Activated T-helper 1 cell treated with anti-CD3 and anti-CD28 coated beads, Interleukin-12 subunit alpha, Interleukin-12 subunit beta, Interleukin-2, Interleukin-4 antibody, amounts not matched to agents 30 ng/mL and 10 ng/mL and 1 ng/mL, durations not matched to agents 14 hours and 24 hours and 36 hours (primary cell): ENCODE measurements at regions of chr1 and their contacts with region 1.

Region 1: DNA sequence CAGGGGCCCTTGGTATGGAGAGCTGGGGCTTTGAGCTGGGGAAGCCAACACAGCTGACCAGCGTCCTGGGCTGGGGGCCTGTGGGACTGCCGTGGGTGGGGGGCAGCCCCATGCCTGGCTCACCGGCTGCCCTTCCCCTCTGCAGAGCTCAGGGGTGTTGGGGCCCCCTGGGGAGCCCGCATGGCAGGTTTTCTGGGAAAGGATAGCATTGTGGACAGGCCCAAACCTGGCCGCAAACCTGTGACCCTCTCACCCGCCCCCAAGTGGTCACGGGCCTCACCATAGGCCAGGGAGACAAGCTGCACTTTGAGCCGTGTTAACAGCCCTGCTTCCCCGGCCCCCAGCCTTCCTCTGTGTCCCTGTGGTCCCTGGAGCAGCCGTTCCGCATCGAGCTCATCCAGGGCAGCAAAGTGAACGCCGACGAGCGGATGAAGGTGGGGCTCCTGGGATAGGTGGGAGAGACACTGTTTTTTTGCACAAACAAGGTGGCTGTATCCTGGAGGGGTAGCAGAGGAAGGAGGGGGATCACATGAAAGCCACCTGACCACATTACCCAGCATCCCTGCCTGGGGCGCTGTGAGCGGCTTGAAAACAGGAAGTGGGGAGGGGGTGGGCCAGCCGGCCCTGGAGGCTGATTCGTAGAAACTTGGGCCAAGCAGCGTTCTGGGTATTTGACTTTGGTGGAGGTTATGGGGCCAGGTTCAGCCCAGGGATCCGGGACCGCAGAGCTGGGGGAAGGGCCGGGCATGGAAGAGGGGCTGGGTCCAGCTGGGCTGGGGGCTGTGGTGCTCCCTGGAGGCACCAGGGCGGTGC is 65.9 kb downstream of the PIK3CD start:
- DNase-seq: peak; percentile 86
- H3K4me3 Mint-ChIP-seq: peak overlapping the region; percentile 82
- H3K27ac Mint-ChIP-seq: peak overlapping the region; percentile 97
- H3K4me1 Mint-ChIP-seq: peaks cover 37% of the 10 kb centered on the region
- H3K27me3 Mint-ChIP-seq: no peaks in the 10 kb centered on the region

Region 2: GRCh38 chr1:9689011-9689706 is 28.2 kb before region 1 on chr1:
- intact Hi-C with region 1: loop called (anchors 1 kb)
- DNase-seq: peak; percentile 71
- H3K4me3 Mint-ChIP-seq: peak overlapping the region; percentile 75
- H3K27ac Mint-ChIP-seq: peak overlapping the region; percentile 70
- H3K4me1 Mint-ChIP-seq: peaks cover 59% of the 10 kb centered on the region
- H3K27me3 Mint-ChIP-seq: no peaks in the 10 kb centered on the region

Region 3: DNA sequence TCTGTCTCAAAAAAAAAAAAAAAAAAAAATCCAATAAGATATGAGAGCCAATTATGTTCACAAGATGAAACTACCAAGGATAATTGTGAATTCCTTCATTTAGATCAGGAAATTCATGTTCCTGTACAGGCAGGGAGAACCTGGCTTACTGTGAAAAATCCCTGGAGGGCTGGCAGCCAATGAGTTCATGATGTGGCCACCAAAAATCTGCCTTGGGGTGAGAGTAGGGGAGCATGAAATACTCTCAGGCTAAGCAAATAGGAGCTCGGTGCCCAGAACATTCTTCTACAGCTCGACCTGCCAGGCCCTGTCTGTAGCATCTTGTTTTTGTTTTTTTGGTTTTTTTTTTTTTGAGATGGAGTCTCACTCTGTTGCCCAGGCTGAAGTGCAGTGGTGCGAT is 15.7 kb before region 1 on chr1:
- intact Hi-C with region 1: loop called (anchors 2 kb)
- DNase-seq: no peak
- H3K4me3 Mint-ChIP-seq: no peak overlapping the region
- H3K27ac Mint-ChIP-seq: no peak overlapping the region
- H3K4me1 Mint-ChIP-seq: peaks cover 59% of the 10 kb centered on the region
- H3K27me3 Mint-ChIP-seq: no peaks in the 10 kb centered on the region

Region 4: DNA sequence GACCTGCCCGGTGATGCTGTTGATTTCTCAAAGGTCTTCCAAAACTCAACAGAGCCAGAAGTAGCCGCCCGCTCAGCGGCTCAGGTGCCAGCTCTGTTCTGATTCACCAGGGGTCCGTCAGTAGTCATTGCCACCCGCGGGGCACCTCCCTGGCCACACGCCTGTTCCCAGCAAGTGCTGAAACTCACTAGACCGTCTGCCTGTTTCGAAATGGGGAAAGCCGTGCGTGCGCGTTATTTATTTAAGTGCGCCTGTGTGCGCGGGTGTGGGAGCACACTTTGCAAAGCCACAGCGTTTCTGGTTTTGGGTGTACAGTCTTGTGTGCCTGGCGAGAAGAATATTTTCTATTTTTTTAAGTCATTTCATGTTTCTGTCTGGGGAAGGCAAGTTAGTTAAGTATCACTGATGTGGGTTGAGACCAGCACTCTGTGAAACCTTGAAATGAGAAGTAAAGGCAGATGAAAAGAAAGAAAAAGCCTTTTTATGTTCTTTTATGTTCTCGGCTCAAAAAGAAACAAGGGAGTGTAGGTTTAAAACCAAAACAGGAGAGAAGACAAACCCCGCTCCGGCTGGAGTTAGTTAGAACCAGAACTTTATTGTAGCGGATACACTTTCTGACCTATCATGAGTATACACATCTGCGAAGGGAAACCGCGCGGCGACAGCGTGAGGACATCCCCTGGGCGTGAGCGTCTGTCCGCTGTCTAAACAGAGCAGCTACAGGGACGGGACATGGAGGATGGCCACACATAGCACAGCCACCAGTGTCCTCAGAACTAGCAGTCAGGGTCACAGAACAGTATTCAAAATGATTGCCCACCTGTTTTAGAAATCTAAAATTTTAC is 11.3 kb after region 1 on chr1:
- intact Hi-C with region 1: loop called (anchors 1 kb)
- DNase-seq: peak; percentile 54
- H3K4me3 Mint-ChIP-seq: peak overlapping the region; percentile 72
- H3K27ac Mint-ChIP-seq: peak overlapping the region; percentile 83
- H3K4me1 Mint-ChIP-seq: peaks cover 56% of the 10 kb centered on the region
- H3K27me3 Mint-ChIP-seq: no peaks in the 10 kb centered on the region